ENCODE measurements at regions of chr5 and their contacts with region 1.

Region 1: DNA sequence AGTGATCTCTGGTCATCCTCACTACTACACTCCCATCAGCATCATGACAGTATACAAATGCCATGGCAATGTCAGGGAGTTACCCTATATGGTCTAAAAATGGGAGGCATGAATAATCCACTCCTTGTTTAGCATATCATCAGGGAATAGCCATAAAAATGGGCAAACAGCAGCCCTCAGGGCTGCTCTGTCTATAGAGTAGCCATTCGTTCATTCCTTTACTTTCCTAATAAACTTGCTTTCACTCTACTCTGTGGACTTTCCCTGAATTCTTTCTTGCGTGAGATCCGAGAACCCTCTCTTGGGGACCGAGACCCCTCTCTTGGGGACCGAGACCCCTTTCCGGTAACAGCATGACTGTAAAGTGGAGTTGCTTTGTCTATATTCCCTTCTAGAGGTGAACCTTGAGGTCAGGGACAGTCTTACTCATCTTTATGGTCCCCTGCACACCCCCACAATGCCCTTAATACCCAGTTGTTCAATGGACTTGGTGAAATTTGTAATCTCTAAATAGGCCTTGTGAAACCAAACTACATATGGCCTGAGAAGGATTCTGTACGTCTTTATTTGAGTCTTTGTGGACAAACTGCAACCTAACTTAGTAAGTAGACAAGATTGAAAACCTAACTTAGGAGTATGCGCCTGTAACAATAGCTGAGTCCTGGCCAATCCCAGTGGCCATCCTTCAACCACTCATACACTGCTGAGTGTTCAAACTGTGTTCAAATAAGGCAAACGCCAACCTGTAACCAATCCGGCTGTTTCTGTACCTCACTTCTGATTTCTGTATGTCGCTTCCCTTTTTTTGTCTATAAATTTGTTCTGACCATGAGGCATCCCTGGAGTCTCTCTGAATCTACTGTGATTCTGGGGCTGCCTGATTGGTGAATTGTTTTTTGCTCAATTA is 32.3 kb upstream of the UBTD2 start:
- DNase-seq: no peak
- H3K4me3 ChIP-seq: no peak overlapping the region
- H3K4me3 Mint-ChIP-seq: peak overlapping the region; percentile 55
- H3K27ac Mint-ChIP-seq: peak overlapping the region; percentile 92
- H3K4me1 ChIP-seq: peaks cover 29% of the 10 kb centered on the region
- H3K4me1 Mint-ChIP-seq: peaks cover 25% of the 10 kb centered on the region
- H3K27me3 ChIP-seq: no peaks in the 10 kb centered on the region
- H3K27me3 Mint-ChIP-seq: no peaks in the 10 kb centered on the region
- CTCF ChIP-seq: no peak

Region 2: GRCh38 chr5:172299916-172300439 is 15.9 kb before region 1 on chr5:
- CTCF ChIA-PET with region 1: no interaction called
- POLR2A ChIA-PET with region 1: no interaction called
- intact Hi-C with region 1: loop called (anchors 2 kb)
- DNase-seq: no peak
- H3K4me3 ChIP-seq: no peak overlapping the region
- H3K4me3 Mint-ChIP-seq: no peak overlapping the region
- H3K27ac Mint-ChIP-seq: no peak overlapping the region
- H3K4me1 ChIP-seq: no peaks in the 10 kb centered on the region
- H3K4me1 Mint-ChIP-seq: peaks cover 7% of the 10 kb centered on the region
- H3K27me3 ChIP-seq: no peaks in the 10 kb centered on the region
- H3K27me3 Mint-ChIP-seq: no peaks in the 10 kb centered on the region
- CTCF ChIP-seq: no peak

Region 3: GRCh38 chr5:172347496-172348052 is 31.7 kb after region 1 on chr5:
- CTCF ChIA-PET with region 1: no interaction called
- POLR2A ChIA-PET with region 1: no interaction called
- intact Hi-C with region 1: loop called (anchors 1 kb)
- DNase-seq: peak in 1 of 2 experiments; percentile 18
- H3K4me3 ChIP-seq: no peak overlapping the region
- H3K4me3 Mint-ChIP-seq: peak overlapping the region; percentile 45
- H3K27ac Mint-ChIP-seq: peak overlapping the region; percentile 90
- H3K4me1 ChIP-seq: peaks cover 32% of the 10 kb centered on the region
- H3K4me1 Mint-ChIP-seq: peaks cover 35% of the 10 kb centered on the region
- H3K27me3 ChIP-seq: no peaks in the 10 kb centered on the region
- H3K27me3 Mint-ChIP-seq: no peaks in the 10 kb centered on the region
- CTCF ChIP-seq: no peak

Measured in Caco-2 (cell line).